T-cell (primary cell): ENCODE measurements at regions of chr2 and their contacts with region 1.

Region 1: GRCh38 chr2:38709567-38710194 is 41.5 kb downstream of the SRSF7 start:
- DNase-seq: peak in 24 of 35 experiments; percentile 8 to 78 (median 31)
- ATAC-seq: peak; percentile 67 to 86 (median 72)
- H3K4me3 ChIP-seq: peak overlapping the region in 1 of 2 donors; percentile 32
- H3K4me3 Mint-ChIP-seq: peak overlapping the region; percentile 34 to 62 (median 54)
- H3K27ac ChIP-seq: peak overlapping the region; percentile 78
- H3K27ac Mint-ChIP-seq: peak overlapping the region; percentile 94 to 96
- H3K4me1 ChIP-seq: peaks cover 17 to 47% of the 10 kb centered on the region in 2 experiments
- H3K4me1 Mint-ChIP-seq: peaks cover 53 to 77% (median 62%) of the 10 kb centered on the region in 3 donors
- H3K27me3 ChIP-seq: no peaks in the 10 kb centered on the region
- H3K27me3 Mint-ChIP-seq: no peaks in the 10 kb centered on the region

Region 2: DNA sequence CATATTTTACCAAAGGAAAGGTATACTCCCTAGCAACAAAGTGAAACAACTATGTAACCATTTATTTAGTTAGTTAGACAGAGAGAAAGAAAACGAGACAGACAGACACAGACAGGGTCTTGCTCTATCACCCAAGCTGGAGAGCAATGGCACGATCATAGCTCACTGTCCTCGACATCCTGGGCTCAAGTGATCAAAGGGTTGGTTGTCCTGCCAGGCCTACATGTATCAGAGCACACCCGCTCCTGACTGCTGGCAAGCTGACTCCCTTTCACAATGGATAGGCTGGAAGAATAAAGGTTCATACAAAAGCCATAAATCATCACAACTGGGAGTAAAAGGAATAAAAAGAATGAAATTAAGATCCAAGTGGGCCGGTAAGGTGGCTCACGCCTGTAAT is 386.1 kb before region 1 on chr2:
- CTCF ChIA-PET with region 1: no interaction called
- POLR2A ChIA-PET with region 1: interaction called in 1 of 2 experiments, 12 read pairs
- DNase-seq: no peak
- ATAC-seq: no peak
- H3K4me3 ChIP-seq: no peak overlapping the region
- H3K4me3 Mint-ChIP-seq: no peak overlapping the region
- H3K27ac ChIP-seq: no peak overlapping the region
- H3K27ac Mint-ChIP-seq: no peak overlapping the region
- H3K4me1 ChIP-seq: peaks cover 0 to 8% of the 10 kb centered on the region in 2 experiments
- H3K4me1 Mint-ChIP-seq: peaks cover 35 to 37% (median 35%) of the 10 kb centered on the region in 3 donors
- H3K27me3 ChIP-seq: no peaks in the 10 kb centered on the region
- H3K27me3 Mint-ChIP-seq: no peaks in the 10 kb centered on the region

Region 3: GRCh38 chr2:38591152-38591551 is 118.5 kb before region 1 on chr2:
- CTCF ChIA-PET with region 1: no interaction called
- POLR2A ChIA-PET with region 1: no interaction called
- DNase-seq: no peak
- ATAC-seq: no peak
- H3K4me3 ChIP-seq: peak overlapping the region in 1 of 2 donors; percentile 6
- H3K4me3 Mint-ChIP-seq: peak overlapping the region in 2 of 3 donors; percentile 34 to 56
- H3K27ac ChIP-seq: peak overlapping the region; percentile 78
- H3K27ac Mint-ChIP-seq: peak overlapping the region; percentile 61 to 84
- H3K4me1 ChIP-seq: peaks cover 0 to 28% of the 10 kb centered on the region in 2 experiments
- H3K4me1 Mint-ChIP-seq: peaks cover 29 to 71% (median 63%) of the 10 kb centered on the region in 3 donors
- H3K27me3 ChIP-seq: no peaks in the 10 kb centered on the region
- H3K27me3 Mint-ChIP-seq: no peaks in the 10 kb centered on the region

Region 4: GRCh38 chr2:38602732-38603401 is 106.8 kb before region 1 on chr2 and contains the start of gene HNRNPLL:
- CTCF ChIA-PET with region 1: interaction called in 1 of 2 experiments, 3 read pairs
- POLR2A ChIA-PET with region 1: interaction called in 1 of 2 experiments, 10 read pairs
- DNase-seq: peak; percentile 81 to 94 (median 89)
- ATAC-seq: peak; percentile 85 to 89 (median 88)
- H3K4me3 ChIP-seq: peak within 1 kb of the TSS; percentile 85 to 86
- H3K4me3 Mint-ChIP-seq: peak within 1 kb of the TSS; percentile 88 to 94 (median 94)
- H3K27ac ChIP-seq: peak within 1 kb of the TSS; percentile 79
- H3K27ac Mint-ChIP-seq: peak within 1 kb of the TSS; percentile 90 to 92
- H3K4me1 ChIP-seq: peaks cover 19 to 22% of the 10 kb centered on the region in 2 experiments
- H3K4me1 Mint-ChIP-seq: peaks cover 45 to 53% (median 49%) of the 10 kb centered on the region in 3 donors
- H3K27me3 ChIP-seq: no peaks in the 10 kb centered on the region
- H3K27me3 Mint-ChIP-seq: no peaks in the 10 kb centered on the region
- total RNA-seq, gene HNRNPLL: 28.1 to 69.0 (median 35.2) TPM

Region 5: DNA sequence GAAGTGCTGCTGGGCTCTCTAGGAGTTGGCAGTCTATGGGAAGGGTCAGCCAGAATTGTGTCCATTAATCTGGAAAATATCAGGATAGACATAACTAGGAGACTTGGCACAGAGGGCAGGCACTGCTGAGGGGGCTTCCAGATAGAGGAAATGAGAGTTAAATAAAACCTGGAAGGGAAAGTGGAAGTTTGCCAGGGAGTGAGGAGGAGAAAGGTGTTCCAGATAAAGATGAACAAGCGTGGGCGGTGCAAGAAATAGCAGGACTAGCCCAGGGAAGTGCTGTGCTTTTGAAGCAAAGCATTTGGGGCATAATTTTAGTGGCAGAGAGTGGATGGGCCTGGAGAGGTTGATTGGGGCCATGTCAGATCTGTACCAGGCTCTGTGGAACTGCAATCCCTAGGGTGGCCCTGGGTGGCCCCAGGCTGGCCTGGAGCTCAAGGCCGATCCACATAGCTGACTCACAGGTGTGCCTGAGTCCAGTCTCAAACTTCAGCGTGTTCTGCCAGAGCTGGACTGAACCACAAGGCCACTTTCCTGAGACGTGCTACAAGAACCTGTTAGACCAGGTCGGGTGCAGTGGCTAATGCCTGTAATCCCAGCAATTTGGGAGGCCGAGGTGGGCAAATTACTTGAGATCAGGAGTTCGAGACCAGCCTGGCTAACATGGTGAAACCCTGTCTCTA is 16.9 kb before region 1 on chr2:
- CTCF ChIA-PET with region 1: interaction called in 1 of 2 experiments, 3 read pairs
- POLR2A ChIA-PET with region 1: interaction called in 1 of 2 experiments, 10 read pairs
- DNase-seq: no peak
- ATAC-seq: no peak
- H3K4me3 ChIP-seq: no peak overlapping the region
- H3K4me3 Mint-ChIP-seq: peak overlapping the region in 1 of 3 donors; percentile 5
- H3K27ac ChIP-seq: peak overlapping the region; percentile 60
- H3K27ac Mint-ChIP-seq: peak overlapping the region; percentile 85 to 88
- H3K4me1 ChIP-seq: peaks cover 0 to 49% of the 10 kb centered on the region in 2 experiments
- H3K4me1 Mint-ChIP-seq: peaks cover 50 to 76% (median 55%) of the 10 kb centered on the region in 3 donors
- H3K27me3 ChIP-seq: no peaks in the 10 kb centered on the region
- H3K27me3 Mint-ChIP-seq: no peaks in the 10 kb centered on the region

Region 6: DNA sequence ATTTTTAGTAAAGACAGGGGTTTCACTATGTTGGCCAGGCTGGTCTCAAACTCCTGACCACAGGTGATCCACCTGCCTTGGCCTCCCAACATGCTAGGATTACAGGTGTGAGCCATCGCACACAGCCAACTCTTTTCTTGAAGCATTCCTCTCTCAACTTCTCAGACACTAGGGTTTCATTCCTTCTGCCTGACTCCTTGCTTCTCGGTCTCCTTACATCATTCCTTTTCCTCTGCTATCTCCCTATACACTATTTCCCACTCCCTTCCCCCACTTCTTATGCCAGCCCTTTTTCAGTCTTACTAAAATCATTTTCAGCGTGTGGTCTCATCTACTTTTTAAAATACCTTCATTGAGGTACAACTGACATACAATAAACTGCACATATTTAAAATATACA is 405.1 kb after region 1 on chr2:
- CTCF ChIA-PET with region 1: interaction called in 1 of 2 experiments, 10 read pairs
- POLR2A ChIA-PET with region 1: no interaction called
- DNase-seq: no peak
- ATAC-seq: no peak
- H3K4me3 ChIP-seq: no peak overlapping the region
- H3K4me3 Mint-ChIP-seq: peak overlapping the region in 1 of 3 donors; percentile 5
- H3K27ac ChIP-seq: no peak overlapping the region
- H3K27ac Mint-ChIP-seq: peak overlapping the region; percentile 15 to 71
- H3K4me1 ChIP-seq: peaks cover 17 to 23% of the 10 kb centered on the region in 2 experiments
- H3K4me1 Mint-ChIP-seq: peaks cover 82 to 86% (median 84%) of the 10 kb centered on the region in 3 donors
- H3K27me3 ChIP-seq: no peaks in the 10 kb centered on the region
- H3K27me3 Mint-ChIP-seq: no peaks in the 10 kb centered on the region